ENCODE measurements at regions of chr11 and their contacts with region 1.

Region 1: DNA sequence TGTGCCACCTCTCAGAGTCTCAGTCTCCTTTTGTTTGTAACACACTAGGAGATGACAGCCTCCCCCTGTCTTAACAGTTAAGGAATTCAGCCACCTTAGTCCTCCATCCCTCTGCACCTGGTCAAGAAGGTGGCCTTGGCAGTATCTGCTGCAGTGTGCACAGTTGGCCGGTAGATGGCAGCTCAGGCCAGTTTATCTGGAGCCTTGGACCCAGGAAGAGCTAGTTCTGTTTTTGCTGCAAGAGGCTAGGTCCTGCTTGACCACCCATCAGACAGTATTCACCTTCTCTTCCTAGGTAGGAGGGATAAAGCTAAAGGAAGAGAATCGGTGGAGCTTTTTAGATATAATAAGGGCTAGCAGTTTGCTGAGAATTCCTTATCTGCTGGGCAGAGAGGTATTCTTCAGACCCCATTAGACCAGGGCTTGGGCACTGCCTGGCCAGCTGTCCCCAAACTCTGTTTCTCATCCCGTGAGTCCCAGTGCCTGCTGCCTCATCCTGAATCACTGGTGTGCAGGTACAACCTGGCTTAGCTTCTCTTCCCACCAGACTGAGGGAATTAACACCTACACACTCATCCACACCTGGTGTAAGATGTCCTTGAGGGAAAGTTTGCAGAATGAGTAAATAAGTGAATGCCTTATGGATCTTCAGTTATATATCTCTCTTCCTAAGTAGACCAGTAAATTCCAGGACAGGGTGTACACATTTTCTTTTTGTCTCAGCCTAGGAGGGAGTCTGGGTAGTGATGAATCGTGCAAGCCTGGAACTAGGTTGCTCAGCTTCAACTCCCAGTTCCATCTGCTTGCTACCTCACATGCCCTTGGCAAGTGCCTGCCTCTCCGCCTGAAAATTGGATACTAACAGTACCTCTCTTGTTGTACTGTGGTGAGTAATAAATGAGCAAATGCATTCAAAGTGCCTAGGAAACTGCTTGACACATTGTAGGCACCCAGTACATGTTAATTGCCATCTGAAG is 70.8 kb upstream of the NARS2 start:
- DNase-seq: peak; percentile 57 to 87 (median 77)
- H3K4me3 ChIP-seq: peak overlapping the region in 25 of 59 donors; percentile 2 to 57 (median 33)
- H3K27ac ChIP-seq: peak overlapping the region in 1 of 59 donors; percentile 27
- H3K27me3 ChIP-seq: peaks cover 0 to 3% (median 0%) of the 10 kb centered on the region in 45 donors
- CTCF ChIP-seq: peak; percentile 79 to 99 (median 97)

Region 2: GRCh38 chr11:78704811-78705210 is 59.3 kb after region 1 on chr11:
- intact Hi-C with region 1: no loop called
- DNase-seq: no peak
- H3K4me3 ChIP-seq: no peak overlapping the region
- H3K27ac ChIP-seq: no peak overlapping the region
- H3K27me3 ChIP-seq: no peaks in the 10 kb centered on the region
- CTCF ChIP-seq: no peak

Region 3: GRCh38 chr11:78715639-78716311 is 70.3 kb after region 1 on chr11:
- intact Hi-C with region 1: loop called (anchors 5 kb)
- DNase-seq: peak; percentile 14 to 80 (median 66)
- H3K4me3 ChIP-seq: no peak overlapping the region
- H3K27ac ChIP-seq: no peak overlapping the region
- H3K27me3 ChIP-seq: no peaks in the 10 kb centered on the region
- CTCF ChIP-seq: peak in 55 of 56 donors; percentile 38 to 81 (median 68)

Region 4: DNA sequence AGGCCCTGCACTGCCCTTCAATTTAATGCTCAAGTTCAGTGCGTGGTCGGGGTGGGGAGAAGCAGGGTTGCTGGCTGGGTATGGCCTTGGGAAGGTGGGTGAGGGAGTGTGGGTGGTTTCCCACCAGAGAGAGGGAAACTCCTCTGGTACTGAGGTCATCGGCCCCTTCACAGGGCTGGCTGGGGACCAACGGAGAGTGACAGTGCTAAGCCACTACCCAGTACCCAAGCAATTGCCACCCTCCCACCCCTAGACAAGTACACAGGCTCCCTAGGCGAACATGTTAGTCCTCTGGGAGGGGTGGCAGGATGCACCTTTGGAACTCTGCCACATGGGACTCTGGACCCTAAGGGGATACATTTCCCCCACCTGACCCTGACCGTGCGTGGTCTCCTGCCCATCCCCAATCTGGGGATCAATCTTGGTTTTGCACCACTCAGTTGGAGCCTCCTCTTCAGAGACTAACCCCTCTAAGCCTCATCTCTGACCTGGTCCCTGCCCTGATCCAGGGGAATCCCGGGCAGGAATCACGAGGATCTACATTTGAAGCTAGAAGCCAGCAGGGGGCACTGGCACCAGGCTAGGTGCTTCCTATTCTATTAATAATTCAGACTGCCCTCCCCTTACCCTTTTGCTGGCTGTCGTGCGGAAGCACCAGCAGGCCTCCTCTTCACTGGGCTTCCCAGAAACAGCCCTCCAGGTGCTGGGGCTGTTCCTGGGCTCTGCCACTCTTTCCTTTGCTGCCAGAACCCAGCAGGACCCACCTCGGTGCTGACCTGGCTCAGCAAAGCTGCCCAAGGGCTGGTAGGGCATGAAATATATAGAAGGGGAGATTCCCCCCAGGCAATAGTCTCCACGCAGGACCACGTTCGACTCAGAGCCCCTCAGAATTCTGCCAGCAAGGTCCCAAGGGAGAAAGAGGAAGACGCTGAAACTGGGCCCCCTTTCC is 417.6 kb after region 1 on chr11:
- intact Hi-C with region 1: loop called in 1 of 2 experiments (anchors 10 kb)
- DNase-seq: peak in 1 of 10 donors; percentile 46
- H3K4me3 ChIP-seq: no peak overlapping the region
- H3K27ac ChIP-seq: no peak overlapping the region
- H3K27me3 ChIP-seq: no peaks in the 10 kb centered on the region
- CTCF ChIP-seq: peak in 50 of 56 donors; percentile 12 to 67 (median 48)

Region 5: DNA sequence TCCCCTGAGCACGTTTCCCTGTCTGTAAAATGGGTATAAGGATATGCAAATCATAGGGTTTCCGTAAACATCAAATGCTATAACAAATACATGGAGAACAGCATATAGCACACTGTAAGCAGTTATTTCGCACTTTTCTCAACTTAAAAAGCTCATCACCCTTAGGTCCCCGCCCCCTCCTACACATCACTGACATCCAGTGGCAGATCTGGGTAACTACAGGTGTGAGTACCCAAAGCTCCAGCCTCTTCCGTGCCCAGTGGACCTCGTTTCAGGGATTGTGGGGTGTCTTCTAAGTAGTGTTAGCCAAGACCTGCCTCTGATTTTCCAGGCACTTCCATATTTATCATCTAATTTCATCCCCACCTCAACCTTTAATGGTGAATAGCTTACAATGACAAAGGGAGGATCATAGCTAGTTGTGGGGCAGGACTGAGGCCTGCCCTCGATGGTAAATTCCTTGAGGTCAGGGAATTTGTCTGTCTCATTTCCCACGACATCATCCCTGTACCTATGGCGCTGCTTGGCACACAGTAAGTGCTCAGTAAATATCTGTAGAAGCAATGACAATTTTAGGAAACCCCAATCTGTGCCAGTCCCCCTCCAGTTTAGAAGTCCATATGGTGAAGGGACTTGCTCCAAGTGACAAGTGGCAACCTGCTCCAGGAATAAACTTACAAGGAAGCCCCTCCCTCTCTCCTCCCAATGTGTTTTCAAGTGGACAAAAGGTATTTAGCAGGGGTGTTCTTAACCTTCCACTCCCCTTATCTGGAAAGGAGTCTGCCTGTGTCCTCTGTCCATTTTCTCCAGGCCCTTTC is 454.8 kb after region 1 on chr11:
- intact Hi-C with region 1: loop called in 1 of 2 experiments (anchors 5 kb)
- DNase-seq: no peak
- H3K4me3 ChIP-seq: no peak overlapping the region
- H3K27ac ChIP-seq: peak overlapping the region in 2 of 59 donors; percentile 19 to 29
- H3K27me3 ChIP-seq: peaks cover 0 to 19% (median 0%) of the 10 kb centered on the region in 45 donors
- CTCF ChIP-seq: peak; percentile 39 to 80 (median 68)

Region 6: DNA sequence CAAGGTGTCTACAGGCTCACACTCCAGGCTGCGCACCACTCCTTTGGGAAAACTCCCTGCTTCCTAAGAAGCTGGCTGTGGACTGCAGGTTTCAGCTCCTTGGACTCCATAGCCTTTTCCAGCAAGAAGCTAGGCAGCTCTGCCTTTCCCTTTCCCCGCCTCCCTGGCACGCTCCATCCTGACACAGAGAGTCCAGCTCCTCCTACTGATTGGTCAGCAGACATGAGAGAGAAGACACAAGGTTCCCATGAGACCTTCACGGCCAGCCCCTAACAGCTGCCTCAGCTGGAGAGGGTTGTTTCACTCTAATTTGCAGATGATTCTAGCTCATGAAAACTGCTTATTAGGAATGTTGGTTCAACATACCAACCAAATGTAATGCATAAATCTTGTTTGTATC is 767.8 kb after region 1 on chr11:
- intact Hi-C with region 1: loop called in 1 of 2 experiments (anchors 10 kb)
- DNase-seq: peak in 6 of 10 donors; percentile 20 to 52 (median 42)
- H3K4me3 ChIP-seq: no peak overlapping the region
- H3K27ac ChIP-seq: no peak overlapping the region
- H3K27me3 ChIP-seq: peaks cover 0 to 4% (median 0%) of the 10 kb centered on the region in 45 donors
- CTCF ChIP-seq: no peak